Cardiac septum (tissue), 1 donor: ENCODE measurements at regions of chr11 and their contacts with region 1.

Region 1: DNA sequence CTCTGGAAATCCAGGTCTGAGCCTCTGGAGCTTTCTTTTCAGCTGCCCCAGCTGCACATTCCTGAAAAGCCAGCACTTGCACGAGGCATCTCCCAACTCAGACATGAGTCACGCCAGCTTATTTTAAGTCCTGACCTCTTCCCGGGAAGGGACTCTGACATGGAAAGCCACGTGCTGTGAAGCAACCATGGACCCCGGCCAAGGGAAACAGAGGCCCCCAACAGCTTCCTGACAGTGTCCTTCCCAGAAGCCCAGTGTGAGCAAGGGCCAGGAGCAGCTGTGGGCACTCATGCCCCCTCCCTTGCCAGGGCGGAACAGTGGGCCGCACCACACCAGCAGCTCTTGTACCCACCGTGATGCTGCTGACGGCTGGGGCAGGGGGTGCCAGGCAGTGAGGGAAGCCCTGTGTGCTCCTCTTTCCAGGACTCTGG is 118.8 kb upstream of the CADM1 start:
- DNase-seq: peak; percentile 91

Region 2: GRCh38 chr11:115334932-115335788 is 287.9 kb before region 1 on chr11:
- intact Hi-C with region 1: no loop called
- DNase-seq: no peak

Region 3: GRCh38 chr11:115606498-115607220 is 16.4 kb before region 1 on chr11:
- intact Hi-C with region 1: loop called (anchors 2 kb)
- DNase-seq: no peak

Region 4: GRCh38 chr11:115659061-115659963 is 36.3 kb after region 1 on chr11:
- intact Hi-C with region 1: loop called (anchors 5 kb)
- DNase-seq: no peak